ENCODE measurements at regions of chr20 and their contacts with region 1.

Region 1: DNA sequence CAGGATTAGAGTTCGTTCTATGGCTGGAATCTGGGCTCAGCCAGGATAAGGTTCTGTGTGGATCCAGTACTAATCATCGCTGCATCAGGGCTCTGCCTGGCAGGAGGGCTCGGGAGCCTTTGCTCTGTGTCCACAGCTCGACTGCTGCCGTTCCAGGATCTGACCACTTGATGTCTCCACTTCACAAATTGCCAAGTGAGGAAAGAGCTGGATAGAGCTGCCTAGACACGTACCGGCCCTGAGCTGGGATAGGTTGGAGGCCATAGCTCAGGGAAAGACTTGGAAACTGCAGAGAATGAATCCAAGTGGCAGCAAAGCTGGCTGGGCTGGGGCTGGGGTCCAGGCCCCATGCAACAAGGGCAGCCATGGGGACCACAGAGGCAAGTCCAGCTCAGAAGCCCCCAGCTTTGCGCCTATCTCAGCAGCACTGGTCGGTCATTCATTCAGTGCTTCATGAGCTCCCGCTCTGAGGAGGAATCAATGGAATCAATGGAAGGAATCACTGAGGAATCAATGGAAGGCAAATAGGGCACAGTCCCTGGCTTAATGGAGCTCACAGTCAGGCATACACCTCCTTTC is 38.0 kb upstream of the TOP1 start:
- DNase-seq: peak; percentile 78
- H3K4me3 Mint-ChIP-seq: no peak overlapping the region
- H3K27ac Mint-ChIP-seq: peak overlapping the region; percentile 63
- H3K4me1 Mint-ChIP-seq: peaks cover 39% of the 10 kb centered on the region
- H3K27me3 Mint-ChIP-seq: no peaks in the 10 kb centered on the region

Region 2: DNA sequence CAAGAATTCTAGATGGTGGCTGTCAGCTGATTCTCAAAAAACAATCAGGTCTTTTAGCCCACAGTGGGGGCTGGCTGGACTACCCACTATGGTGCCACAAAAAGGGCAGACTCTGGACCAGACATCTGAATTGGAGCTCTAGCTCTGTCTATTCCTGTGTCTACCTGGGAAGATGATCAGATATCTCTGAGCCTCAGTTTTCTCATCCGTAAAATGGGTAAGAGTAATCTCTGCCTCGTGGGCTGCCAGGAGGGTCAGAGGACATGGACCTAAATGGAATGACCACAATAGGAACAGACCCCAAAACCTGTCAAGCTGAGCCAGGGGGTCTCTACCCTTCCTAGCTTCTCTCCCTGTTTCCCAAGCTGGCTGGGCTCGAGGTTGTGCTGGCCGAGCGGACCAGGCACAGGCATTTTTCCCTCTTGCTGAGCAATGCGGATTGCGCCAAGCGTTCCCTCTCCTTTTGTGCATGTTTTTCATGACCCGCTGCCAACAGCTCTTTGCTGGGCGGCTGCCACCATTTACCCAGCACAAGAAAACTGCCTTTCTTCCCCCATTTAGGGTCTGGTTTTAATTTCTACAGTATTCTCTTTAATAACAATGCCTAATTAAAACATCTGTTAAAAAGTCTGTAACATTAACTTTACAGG is 226.9 kb before region 1 on chr20:
- CTCF ChIA-PET with region 1: no interaction called
- POLR2A ChIA-PET with region 1: no interaction called
- DNase-seq: no peak
- H3K4me3 Mint-ChIP-seq: no peak overlapping the region
- H3K27ac Mint-ChIP-seq: no peak overlapping the region
- H3K4me1 Mint-ChIP-seq: no peaks in the 10 kb centered on the region
- H3K27me3 Mint-ChIP-seq: peaks cover 3% of the 10 kb centered on the region

Region 3: GRCh38 chr20:40970201-40970600 is 20.4 kb before region 1 on chr20:
- CTCF ChIA-PET with region 1: interaction called, 25 read pairs
- POLR2A ChIA-PET with region 1: interaction called, 3 read pairs
- DNase-seq: no peak
- H3K4me3 Mint-ChIP-seq: no peak overlapping the region
- H3K27ac Mint-ChIP-seq: no peak overlapping the region
- H3K4me1 Mint-ChIP-seq: peaks cover 12% of the 10 kb centered on the region
- H3K27me3 Mint-ChIP-seq: peaks cover 40% of the 10 kb centered on the region

Region 4: GRCh38 chr20:41011551-41012067 is 21.0 kb after region 1 on chr20:
- CTCF ChIA-PET with region 1: interaction called, 22 read pairs
- POLR2A ChIA-PET with region 1: interaction called, 11 read pairs
- DNase-seq: no peak
- H3K4me3 Mint-ChIP-seq: no peak overlapping the region
- H3K27ac Mint-ChIP-seq: peak overlapping the region; percentile 44
- H3K4me1 Mint-ChIP-seq: peaks cover 48% of the 10 kb centered on the region
- H3K27me3 Mint-ChIP-seq: no peaks in the 10 kb centered on the region

Region 5: DNA sequence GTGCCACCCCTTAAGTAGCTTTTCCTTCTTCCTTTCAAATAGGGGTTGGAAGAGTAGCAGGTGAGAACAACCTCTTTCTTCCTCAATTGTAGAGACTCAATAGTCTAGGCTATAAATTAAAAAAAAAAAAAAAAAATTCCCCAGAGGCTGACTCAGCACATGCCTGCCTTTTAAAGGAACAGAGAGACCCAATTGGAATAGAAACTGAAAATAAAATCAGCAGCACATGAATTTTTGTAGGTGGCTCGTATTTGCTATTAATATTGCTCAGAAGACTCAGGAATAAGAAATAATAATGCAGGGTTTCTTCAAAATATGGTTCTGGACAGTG is 57.3 kb after region 1 on chr20:
- CTCF ChIA-PET with region 1: interaction called, 36 read pairs
- POLR2A ChIA-PET with region 1: interaction called, 15 read pairs
- DNase-seq: no peak
- H3K4me3 Mint-ChIP-seq: peak overlapping the region; percentile 75
- H3K27ac Mint-ChIP-seq: peak overlapping the region; percentile 95
- H3K4me1 Mint-ChIP-seq: peaks cover 85% of the 10 kb centered on the region
- H3K27me3 Mint-ChIP-seq: no peaks in the 10 kb centered on the region

Region 6: GRCh38 chr20:41086402-41087338 is 96.0 kb after region 1 on chr20:
- CTCF ChIA-PET with region 1: interaction called, 252 read pairs
- POLR2A ChIA-PET with region 1: interaction called, 7 read pairs
- DNase-seq: no peak
- H3K4me3 Mint-ChIP-seq: no peak overlapping the region
- H3K27ac Mint-ChIP-seq: peak overlapping the region; percentile 27
- H3K4me1 Mint-ChIP-seq: peaks cover 21% of the 10 kb centered on the region
- H3K27me3 Mint-ChIP-seq: no peaks in the 10 kb centered on the region

Region 7: GRCh38 chr20:41136680-41137613 is 146.3 kb after region 1 on chr20 and contains the start of gene PLCG1:
- CTCF ChIA-PET with region 1: interaction called, 26 read pairs
- POLR2A ChIA-PET with region 1: interaction called, 4 read pairs
- DNase-seq: peak; percentile 86
- H3K4me3 Mint-ChIP-seq: peak within 1 kb of the TSS; percentile 86
- H3K27ac Mint-ChIP-seq: peak within 1 kb of the TSS; percentile 90
- H3K4me1 Mint-ChIP-seq: peaks cover 57% of the 10 kb centered on the region
- H3K27me3 Mint-ChIP-seq: no peaks in the 10 kb centered on the region
- total RNA-seq, gene PLCG1: 267 to 286 TPM

Measured in activated CD4-positive, alpha-beta memory T cell treated with anti-CD3 and anti-CD28 coated beads, Interleukin-2, amount 10 ng/mL, durations not matched to agents 7 days and 5 days (primary cell).